Ascending aorta (tissue), 2 donors: ENCODE measurements at regions of chr1 and their contacts with region 1.

Region 1: DNA sequence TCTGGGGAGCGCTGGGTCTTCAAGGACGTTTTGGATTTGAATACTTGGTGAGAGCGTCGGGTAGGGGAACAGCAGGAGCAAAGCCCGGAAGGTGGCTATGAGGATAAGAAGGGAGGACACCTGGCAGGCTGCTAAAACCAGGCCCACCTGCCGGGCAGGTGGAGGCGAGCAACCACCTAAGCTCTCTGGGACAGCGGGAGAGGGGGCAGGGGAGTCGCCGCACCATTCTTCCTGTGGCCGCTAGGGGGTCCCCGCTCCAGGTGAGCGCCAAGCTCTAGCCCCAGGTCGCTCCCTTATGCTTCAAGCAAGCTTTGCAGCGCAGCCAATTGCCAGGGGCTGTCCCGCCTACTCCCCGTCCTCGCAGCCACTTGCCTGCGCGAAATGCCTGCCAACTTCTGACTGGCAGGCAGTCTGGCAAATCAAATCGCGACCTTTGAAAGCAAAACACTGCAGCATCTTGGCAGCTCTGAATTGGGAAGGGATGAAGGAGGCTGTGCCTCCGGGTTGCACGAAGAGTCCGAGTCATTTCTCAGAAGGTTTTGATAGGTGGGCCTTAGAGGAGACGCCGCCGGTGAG is at the start of gene NIPAL3:
- DNase-seq: peak; percentile 89 to 97
- H3K4me3 ChIP-seq: peak within 1 kb of the TSS; percentile 68 to 71
- H3K27ac ChIP-seq: no peak within 1 kb of the TSS
- H3K4me1 ChIP-seq: peaks cover 3 to 12% of the 10 kb centered on the region in 2 donors
- H3K27me3 ChIP-seq: no peaks in the 10 kb centered on the region
- CTCF ChIP-seq: peak; percentile 56 to 63 (median 62)
- total RNA-seq, gene NIPAL3: 73.9 TPM

Region 2: GRCh38 chr1:24199289-24199900 is 216.0 kb before region 1 on chr1:
- intact Hi-C with region 1: no loop called
- DNase-seq: peak in 1 of 2 donors; percentile 71
- H3K4me3 ChIP-seq: no peak overlapping the region
- H3K27ac ChIP-seq: no peak overlapping the region
- H3K4me1 ChIP-seq: no peaks in the 10 kb centered on the region
- H3K27me3 ChIP-seq: no peaks in the 10 kb centered on the region
- CTCF ChIP-seq: peak; percentile 80 to 92 (median 88)

Region 3: DNA sequence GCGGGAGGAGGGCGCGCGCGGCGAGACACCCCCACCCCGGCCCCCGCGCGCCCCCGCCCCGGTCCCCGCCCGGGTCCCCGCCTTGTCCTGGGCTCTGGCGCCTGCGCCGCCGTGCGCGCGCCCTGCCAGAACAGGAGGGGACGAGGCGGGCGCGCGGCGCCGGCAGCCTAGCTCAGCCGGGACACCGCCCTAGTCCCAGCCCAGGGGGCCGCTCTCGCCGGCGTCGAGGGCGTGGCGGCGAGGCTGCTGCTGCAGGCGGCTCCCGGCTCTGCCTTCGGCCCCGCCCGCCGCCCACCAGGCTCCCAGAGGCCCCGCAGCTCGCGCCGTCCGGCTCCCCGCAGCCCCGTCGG is 87.3 kb after region 1 on chr1 and contains the start of gene RCAN3:
- intact Hi-C with region 1: loop called (anchors 5 kb)
- DNase-seq: peak; percentile 26 to 75
- H3K4me3 ChIP-seq: peak within 1 kb of the TSS; percentile 69 to 87
- H3K27ac ChIP-seq: peak within 1 kb of the TSS in 1 of 2 donors; percentile 52
- H3K4me1 ChIP-seq: peaks cover 0 to 3% of the 10 kb centered on the region in 2 donors
- H3K27me3 ChIP-seq: no peaks in the 10 kb centered on the region
- CTCF ChIP-seq: no peak
- total RNA-seq, gene RCAN3: 2.0 TPM

Region 4: DNA sequence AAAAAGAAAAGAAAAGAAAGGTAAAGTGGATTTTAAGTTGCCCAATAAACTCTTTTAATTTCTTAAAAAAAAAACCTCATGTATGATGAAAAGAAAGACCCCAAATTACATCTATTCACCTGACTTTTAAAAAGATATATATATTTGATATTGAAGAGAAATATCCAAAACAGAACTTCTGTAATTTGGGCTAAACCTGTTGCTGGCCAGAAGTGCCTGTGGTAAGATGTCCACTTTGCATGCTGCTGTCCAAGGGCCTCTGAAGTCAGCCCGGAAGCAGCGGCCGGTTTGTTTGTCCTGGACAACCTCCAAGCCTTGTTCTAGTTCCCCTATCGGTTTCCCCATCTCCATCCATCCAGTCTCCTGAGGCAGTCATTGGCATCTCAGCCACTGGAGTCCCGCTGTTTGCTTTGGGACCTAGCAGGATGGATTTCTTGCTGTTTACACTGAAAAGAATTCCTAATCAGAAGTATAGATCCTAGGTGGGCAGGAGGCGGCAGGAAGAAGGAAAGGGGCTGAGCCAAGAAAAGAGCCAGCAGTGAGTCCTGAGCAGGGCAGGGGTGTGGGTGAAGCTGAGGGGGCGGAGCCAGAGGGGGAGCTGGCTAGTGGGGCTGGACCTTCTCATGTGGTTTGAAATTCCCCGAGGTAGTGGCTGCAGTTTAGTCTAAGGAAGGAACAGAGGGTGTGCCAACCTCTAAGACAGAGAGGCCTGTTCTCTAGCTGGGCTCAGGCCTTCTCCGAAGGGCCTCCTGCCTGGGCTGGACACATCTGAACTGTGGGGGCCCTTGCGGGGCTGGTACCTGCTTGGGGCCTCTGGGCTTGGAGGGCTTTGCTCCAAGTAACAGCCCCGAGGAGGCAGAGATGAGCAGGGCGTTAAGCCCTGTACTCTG is 143.7 kb after region 1 on chr1:
- intact Hi-C with region 1: no loop called
- DNase-seq: no peak
- H3K4me3 ChIP-seq: no peak overlapping the region
- H3K27ac ChIP-seq: no peak overlapping the region
- H3K4me1 ChIP-seq: no peaks in the 10 kb centered on the region
- H3K27me3 ChIP-seq: peaks cover 17% of the 10 kb centered on the region
- CTCF ChIP-seq: no peak

Region 5: DNA sequence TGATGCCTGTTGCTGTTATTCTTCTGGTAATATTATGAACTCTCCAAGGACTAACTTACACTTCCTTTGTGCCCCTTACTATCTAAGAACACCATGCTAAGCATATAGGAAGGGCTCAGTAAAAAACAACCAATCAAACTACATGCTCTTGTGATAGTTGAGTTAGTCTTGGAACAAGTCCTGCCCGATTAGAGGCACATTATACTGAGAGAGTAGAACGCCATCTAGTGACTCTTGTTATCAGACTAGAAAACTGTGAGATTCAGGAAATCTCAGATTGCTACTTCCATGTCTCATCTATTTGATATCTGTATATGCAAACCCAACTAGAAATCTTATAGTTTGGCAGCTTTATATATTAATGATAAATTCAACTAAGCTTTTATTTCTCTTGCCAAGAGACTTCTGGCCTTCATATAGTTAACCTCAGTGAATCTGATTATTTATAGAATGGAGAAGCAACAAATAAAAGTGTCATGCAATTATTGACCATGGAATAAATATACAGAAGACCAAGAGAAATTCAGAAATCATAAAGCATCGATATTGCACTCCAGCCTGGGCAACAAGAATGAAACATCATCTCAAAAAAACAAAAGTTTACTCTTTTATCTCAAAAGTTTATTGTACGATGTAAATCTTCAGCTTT is 219.9 kb after region 1 on chr1:
- intact Hi-C with region 1: loop called (anchors 5 kb)
- DNase-seq: no peak
- H3K4me3 ChIP-seq: no peak overlapping the region
- H3K27ac ChIP-seq: no peak overlapping the region
- H3K4me1 ChIP-seq: no peaks in the 10 kb centered on the region
- H3K27me3 ChIP-seq: no peaks in the 10 kb centered on the region
- CTCF ChIP-seq: peak; percentile 28 to 56 (median 31)